Lower lobe of right lung (tissue), 2 donors: ENCODE measurements at regions of chr3 and their contacts with region 1.

Region 1: DNA sequence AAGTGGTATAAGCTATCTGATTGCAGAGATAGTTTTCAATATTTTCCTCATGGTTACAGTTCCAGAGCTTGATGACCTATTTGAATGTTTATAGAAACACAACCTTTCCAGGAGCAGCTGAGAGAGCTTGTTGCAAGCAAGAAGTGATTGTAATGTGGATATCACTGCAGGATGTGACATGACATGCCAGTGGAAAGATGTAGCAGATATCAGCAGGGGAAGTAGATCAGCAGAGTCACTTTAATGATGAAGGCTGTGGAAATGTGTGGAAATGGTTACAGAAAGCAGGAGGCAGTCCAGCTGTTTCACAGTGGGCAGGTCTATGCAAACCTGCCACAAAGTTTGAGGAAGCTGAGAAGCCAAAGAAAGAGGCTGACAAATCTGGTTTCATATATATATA is 21.0 kb downstream of the TMEM158 start:
- DNase-seq: no peak
- ATAC-seq: no peak
- H3K4me3 ChIP-seq: no peak overlapping the region
- H3K27ac ChIP-seq: no peak overlapping the region
- H3K4me1 ChIP-seq: no peaks in the 10 kb centered on the region
- H3K27me3 ChIP-seq: no peaks in the 10 kb centered on the region
- CTCF ChIP-seq: no peak

Region 2: DNA sequence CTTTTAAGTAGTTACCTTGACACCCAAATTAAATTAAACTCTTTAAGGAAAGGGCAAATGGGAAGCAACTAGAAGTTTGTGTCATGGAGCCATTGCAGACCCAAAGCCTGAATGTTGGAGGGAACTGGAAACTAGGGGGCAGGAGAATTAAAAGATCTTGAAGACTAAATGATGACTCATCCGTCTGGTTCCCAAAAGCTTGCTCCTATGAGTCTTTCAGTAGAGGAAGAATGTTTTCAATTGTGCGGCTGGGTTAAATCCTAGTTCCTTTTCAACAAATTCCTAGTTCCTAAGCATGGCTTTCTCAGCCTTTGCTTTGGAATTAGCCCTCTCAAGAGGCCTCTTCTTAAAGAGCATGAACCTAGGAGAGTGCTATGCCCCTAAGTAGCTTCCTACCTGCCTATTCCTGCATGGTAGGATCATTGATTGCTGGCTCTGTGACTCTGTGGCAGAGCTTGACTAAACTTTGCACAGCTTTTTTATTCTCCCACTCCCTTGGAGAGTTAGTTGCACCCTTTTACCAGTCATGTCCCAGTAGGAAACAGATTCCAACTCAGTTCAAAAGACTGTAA is 161.3 kb before region 1 on chr3:
- intact Hi-C with region 1: loop called (anchors 5 kb)
- DNase-seq: no peak
- ATAC-seq: peak in 1 of 2 donors; percentile 36
- H3K4me3 ChIP-seq: no peak overlapping the region
- H3K27ac ChIP-seq: no peak overlapping the region
- H3K4me1 ChIP-seq: peaks cover 24% of the 10 kb centered on the region
- H3K27me3 ChIP-seq: no peaks in the 10 kb centered on the region
- CTCF ChIP-seq: no peak